B cell (primary cell): ENCODE measurements at regions of chrX and their contacts with region 1.

Region 1: GRCh38 chrX:71128915-71129765 is 10.7 kb downstream of the MED12 start:
- DNase-seq: peak; percentile 79
- ATAC-seq: peak; percentile 90
- H3K4me3 ChIP-seq: no peak overlapping the region
- H3K4me3 Mint-ChIP-seq: no peak overlapping the region
- H3K27ac ChIP-seq: no peak overlapping the region
- H3K27ac Mint-ChIP-seq: peak overlapping the region; percentile 51
- H3K4me1 ChIP-seq: peaks cover 0 to 8% of the 10 kb centered on the region in 2 donors
- H3K4me1 Mint-ChIP-seq: peaks cover 9% of the 10 kb centered on the region
- H3K27me3 ChIP-seq: no peaks in the 10 kb centered on the region
- H3K27me3 Mint-ChIP-seq: no peaks in the 10 kb centered on the region
- CTCF ChIP-seq: peak; percentile 77

Region 2: DNA sequence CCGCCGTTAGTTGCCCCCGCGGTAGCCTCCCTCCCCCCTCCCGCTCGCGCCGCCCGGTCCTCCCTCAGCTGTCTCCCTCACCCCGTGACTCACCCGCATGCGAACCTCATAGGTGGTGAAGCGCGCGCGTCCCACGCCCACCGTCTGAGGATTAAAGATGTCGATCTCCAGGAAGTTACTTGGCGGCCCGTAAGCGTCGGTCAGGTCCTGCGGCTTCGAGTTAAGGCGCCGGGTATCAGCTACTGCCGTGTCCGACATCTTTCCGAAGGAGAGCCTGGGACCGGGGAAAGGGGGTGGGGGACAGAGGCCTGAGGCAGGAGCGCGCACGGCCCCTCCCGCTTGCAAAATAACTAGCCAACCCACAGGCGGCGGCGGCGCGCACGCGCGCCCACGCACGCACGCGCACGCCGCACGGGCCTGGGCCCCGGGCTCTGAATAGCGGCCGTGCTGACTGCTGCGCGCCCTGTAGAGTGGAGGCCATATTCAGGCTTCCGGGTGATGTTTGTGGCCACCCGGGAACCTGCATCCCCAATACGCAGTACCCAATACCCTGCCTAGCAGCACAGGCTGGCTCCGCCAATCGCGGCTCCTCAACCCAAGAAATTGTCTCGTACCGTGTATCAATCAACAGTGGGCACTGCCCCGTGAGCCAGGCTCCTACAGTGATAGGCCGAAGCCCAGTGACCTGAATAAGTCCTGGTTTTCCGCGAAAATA is 60.9 kb before region 1 on chrX and contains the start of gene SNX12:
- CTCF ChIA-PET with region 1: no interaction called
- POLR2A ChIA-PET with region 1: no interaction called
- intact Hi-C with region 1: loop called (anchors 1 kb)
- DNase-seq: peak; percentile 93
- ATAC-seq: peak; percentile 93
- H3K4me3 ChIP-seq: peak within 1 kb of the TSS; percentile 74 to 79 (median 76)
- H3K4me3 Mint-ChIP-seq: peak within 1 kb of the TSS; percentile 96
- H3K27ac ChIP-seq: peak within 1 kb of the TSS; percentile 74 to 85
- H3K27ac Mint-ChIP-seq: peak within 1 kb of the TSS; percentile 96
- H3K4me1 ChIP-seq: peaks cover 0 to 12% of the 10 kb centered on the region in 2 donors
- H3K4me1 Mint-ChIP-seq: peaks cover 17% of the 10 kb centered on the region
- H3K27me3 ChIP-seq: no peaks in the 10 kb centered on the region
- H3K27me3 Mint-ChIP-seq: no peaks in the 10 kb centered on the region
- CTCF ChIP-seq: no peak
- total RNA-seq, gene SNX12: 32.6 and 42.9 TPM in 2 replicates

Region 3: GRCh38 chrX:71095543-71095911 is 33.6 kb before region 1 on chrX and contains the start of gene FOXO4:
- CTCF ChIA-PET with region 1: interaction called, 78 read pairs
- POLR2A ChIA-PET with region 1: interaction called, 9 read pairs
- intact Hi-C with region 1: loop called (anchors 1 kb)
- DNase-seq: peak; percentile 87
- ATAC-seq: peak; percentile 85
- H3K4me3 ChIP-seq: peak within 1 kb of the TSS; percentile 49 to 73 (median 61)
- H3K4me3 Mint-ChIP-seq: peak within 1 kb of the TSS; percentile 98
- H3K27ac ChIP-seq: peak within 1 kb of the TSS; percentile 43 to 61
- H3K27ac Mint-ChIP-seq: peak within 1 kb of the TSS; percentile 99
- H3K4me1 ChIP-seq: peaks cover 13 to 28% of the 10 kb centered on the region in 2 donors
- H3K4me1 Mint-ChIP-seq: peaks cover 26% of the 10 kb centered on the region
- H3K27me3 ChIP-seq: no peaks in the 10 kb centered on the region
- H3K27me3 Mint-ChIP-seq: no peaks in the 10 kb centered on the region
- CTCF ChIP-seq: no peak
- total RNA-seq, gene FOXO4: 41.4 and 48.7 TPM in 2 replicates

Region 4: DNA sequence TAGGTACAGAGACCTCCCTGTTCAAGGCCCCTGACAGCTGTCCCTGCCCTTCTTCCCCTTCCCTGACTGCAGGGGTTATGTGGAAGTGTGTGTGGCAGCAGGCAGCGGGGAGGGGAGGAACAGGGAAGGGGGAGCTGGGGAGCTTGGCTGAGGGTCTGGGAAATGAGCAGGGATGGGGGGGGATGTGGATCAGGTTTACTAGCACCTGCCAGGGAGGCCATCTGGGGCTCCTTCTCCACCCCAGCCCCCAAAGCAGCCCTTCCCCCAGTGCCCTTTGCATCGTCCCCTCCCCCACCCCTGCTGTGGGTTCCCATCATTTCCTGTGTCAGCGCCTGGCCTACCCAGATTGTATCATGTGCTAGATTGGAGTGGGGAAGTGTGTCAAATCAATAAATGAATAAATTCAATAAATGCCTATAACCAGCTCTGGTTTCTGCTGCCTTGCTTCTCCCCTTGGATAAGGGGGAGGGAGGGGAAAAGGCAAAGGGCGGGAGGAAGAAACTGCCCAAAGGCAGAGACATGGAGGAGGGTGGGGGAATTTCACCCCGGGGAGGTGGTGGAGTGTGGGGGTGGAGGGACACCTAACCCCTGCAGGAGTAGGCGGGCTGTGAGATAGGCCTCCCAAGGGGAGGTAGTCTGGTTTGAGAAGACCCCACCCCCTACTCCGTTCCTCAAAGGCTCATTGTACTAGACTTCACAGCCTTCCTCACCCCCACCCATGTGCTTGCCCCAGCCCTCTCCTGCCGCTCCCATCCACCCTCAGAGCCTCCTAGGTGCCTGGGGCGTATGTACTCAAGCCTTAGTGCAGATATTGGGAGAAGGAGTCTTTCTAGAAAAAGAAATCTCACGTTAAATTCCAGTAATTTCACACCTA is 25.8 kb before region 1 on chrX:
- CTCF ChIA-PET with region 1: interaction called, 78 read pairs
- POLR2A ChIA-PET with region 1: no interaction called
- intact Hi-C with region 1: loop called (anchors 1 kb)
- DNase-seq: peak; percentile 60
- ATAC-seq: peak; percentile 67
- H3K4me3 ChIP-seq: peak overlapping the region in 1 of 5 experiments; percentile 41
- H3K4me3 Mint-ChIP-seq: peak overlapping the region; percentile 73
- H3K27ac ChIP-seq: peak overlapping the region; percentile 67 to 83
- H3K27ac Mint-ChIP-seq: peak overlapping the region; percentile 90
- H3K4me1 ChIP-seq: peaks cover 52 to 60% of the 10 kb centered on the region in 2 donors
- H3K4me1 Mint-ChIP-seq: peaks cover 59% of the 10 kb centered on the region
- H3K27me3 ChIP-seq: no peaks in the 10 kb centered on the region
- H3K27me3 Mint-ChIP-seq: no peaks in the 10 kb centered on the region
- CTCF ChIP-seq: no peak

Region 5: GRCh38 chrX:71111141-71111843 is 17.8 kb before region 1 on chrX and contains the start of gene IL2RG:
- CTCF ChIA-PET with region 1: interaction called, 33 read pairs
- POLR2A ChIA-PET with region 1: no interaction called
- intact Hi-C with region 1: no loop called
- DNase-seq: peak; percentile 90
- ATAC-seq: peak; percentile 93
- H3K4me3 ChIP-seq: peak within 1 kb of the TSS; percentile 75 to 90 (median 82)
- H3K4me3 Mint-ChIP-seq: peak within 1 kb of the TSS; percentile 98
- H3K27ac ChIP-seq: peak within 1 kb of the TSS; percentile 98
- H3K27ac Mint-ChIP-seq: peak within 1 kb of the TSS; percentile 99
- H3K4me1 ChIP-seq: peaks cover 53 to 65% of the 10 kb centered on the region in 2 donors
- H3K4me1 Mint-ChIP-seq: peaks cover 63% of the 10 kb centered on the region
- H3K27me3 ChIP-seq: no peaks in the 10 kb centered on the region
- H3K27me3 Mint-ChIP-seq: no peaks in the 10 kb centered on the region
- CTCF ChIP-seq: no peak
- total RNA-seq, gene IL2RG: 276 and 297 TPM in 2 replicates

Region 6: DNA sequence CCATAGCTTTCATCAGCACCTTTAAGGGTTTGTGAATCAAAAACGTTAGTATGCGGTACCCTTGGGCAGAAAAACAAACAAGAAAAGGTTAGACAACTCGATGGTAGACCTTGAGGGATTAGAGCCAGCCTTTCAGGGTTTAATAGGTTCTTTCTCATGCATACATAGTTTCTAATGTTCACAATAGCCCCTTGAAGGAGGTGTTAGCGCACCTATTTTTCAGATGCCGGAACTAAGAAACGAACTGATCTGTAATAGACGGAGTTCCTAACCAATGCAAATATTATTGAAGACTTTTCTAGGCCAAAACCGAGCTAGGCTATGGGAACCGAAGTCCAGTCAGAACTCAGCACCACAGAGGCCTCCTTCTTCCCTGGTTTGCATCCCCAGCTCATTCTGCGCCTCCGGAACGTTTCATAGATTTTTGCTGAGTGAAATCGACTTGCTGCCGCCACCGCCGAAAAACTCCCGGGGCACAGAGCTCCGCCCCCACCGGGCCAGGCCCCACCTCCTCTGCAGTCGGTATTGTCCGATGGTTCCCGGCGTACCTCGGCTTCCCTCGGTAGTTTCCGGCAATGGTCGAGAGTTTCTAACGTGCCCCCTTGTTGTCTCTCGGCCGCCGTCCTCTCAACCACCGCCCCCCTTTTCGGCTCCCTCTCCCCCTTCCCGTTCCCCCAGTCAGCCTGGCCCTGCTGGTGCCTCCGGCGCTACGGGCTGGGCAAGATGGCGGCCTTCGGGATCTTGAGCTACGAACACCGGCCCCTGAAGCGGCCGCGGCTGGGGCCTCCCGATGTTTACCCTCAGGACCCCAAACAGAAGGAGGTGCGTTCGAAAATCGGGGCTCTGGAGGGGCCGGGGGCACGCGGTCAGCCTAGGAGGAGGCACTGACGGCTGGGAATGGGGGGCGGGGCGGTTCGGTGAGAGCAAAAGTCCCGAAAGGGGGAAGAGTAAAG is 10.8 kb before region 1 on chrX and contains the start of gene MED12:
- CTCF ChIA-PET with region 1: interaction called, 33 read pairs
- POLR2A ChIA-PET with region 1: interaction called, 3 read pairs
- intact Hi-C with region 1: no loop called
- DNase-seq: peak; percentile 83
- ATAC-seq: peak; percentile 97
- H3K4me3 ChIP-seq: peak within 1 kb of the TSS; percentile 70 to 78 (median 74)
- H3K4me3 Mint-ChIP-seq: peak within 1 kb of the TSS; percentile 88
- H3K27ac ChIP-seq: peak within 1 kb of the TSS; percentile 85 to 90
- H3K27ac Mint-ChIP-seq: peak within 1 kb of the TSS; percentile 91
- H3K4me1 ChIP-seq: peaks cover 17 to 27% of the 10 kb centered on the region in 2 donors
- H3K4me1 Mint-ChIP-seq: peaks cover 17% of the 10 kb centered on the region
- H3K27me3 ChIP-seq: no peaks in the 10 kb centered on the region
- H3K27me3 Mint-ChIP-seq: no peaks in the 10 kb centered on the region
- CTCF ChIP-seq: no peak
- total RNA-seq, gene MED12: 118 and 123 TPM in 2 replicates